Activated CD8-positive, alpha-beta T cell treated with anti-CD3 and anti-CD28 coated beads, Interleukin-2, amount 10 ng/mL, durations not matched to agents 7 days and 5 days (primary cell): ENCODE measurements at regions of chr15 and their contacts with region 1.

Region 1: GRCh38 chr15:90362936-90363212 is 10.8 kb downstream of the ZNF774 start:
- DNase-seq: no peak
- ATAC-seq: no peak
- H3K4me3 Mint-ChIP-seq: no peak overlapping the region
- H3K27ac Mint-ChIP-seq: no peak overlapping the region
- H3K4me1 Mint-ChIP-seq: peaks cover 42% of the 10 kb centered on the region
- H3K27me3 Mint-ChIP-seq: no peaks in the 10 kb centered on the region

Region 2: GRCh38 chr15:90382305-90382704 is 19.4 kb after region 1 on chr15:
- CTCF ChIA-PET with region 1: interaction called, 39 read pairs
- POLR2A ChIA-PET with region 1: interaction called, 15 read pairs
- DNase-seq: no peak
- ATAC-seq: no peak
- H3K4me3 Mint-ChIP-seq: no peak overlapping the region
- H3K27ac Mint-ChIP-seq: peak overlapping the region; percentile 1
- H3K4me1 Mint-ChIP-seq: peaks cover 38% of the 10 kb centered on the region
- H3K27me3 Mint-ChIP-seq: no peaks in the 10 kb centered on the region

Region 3: DNA sequence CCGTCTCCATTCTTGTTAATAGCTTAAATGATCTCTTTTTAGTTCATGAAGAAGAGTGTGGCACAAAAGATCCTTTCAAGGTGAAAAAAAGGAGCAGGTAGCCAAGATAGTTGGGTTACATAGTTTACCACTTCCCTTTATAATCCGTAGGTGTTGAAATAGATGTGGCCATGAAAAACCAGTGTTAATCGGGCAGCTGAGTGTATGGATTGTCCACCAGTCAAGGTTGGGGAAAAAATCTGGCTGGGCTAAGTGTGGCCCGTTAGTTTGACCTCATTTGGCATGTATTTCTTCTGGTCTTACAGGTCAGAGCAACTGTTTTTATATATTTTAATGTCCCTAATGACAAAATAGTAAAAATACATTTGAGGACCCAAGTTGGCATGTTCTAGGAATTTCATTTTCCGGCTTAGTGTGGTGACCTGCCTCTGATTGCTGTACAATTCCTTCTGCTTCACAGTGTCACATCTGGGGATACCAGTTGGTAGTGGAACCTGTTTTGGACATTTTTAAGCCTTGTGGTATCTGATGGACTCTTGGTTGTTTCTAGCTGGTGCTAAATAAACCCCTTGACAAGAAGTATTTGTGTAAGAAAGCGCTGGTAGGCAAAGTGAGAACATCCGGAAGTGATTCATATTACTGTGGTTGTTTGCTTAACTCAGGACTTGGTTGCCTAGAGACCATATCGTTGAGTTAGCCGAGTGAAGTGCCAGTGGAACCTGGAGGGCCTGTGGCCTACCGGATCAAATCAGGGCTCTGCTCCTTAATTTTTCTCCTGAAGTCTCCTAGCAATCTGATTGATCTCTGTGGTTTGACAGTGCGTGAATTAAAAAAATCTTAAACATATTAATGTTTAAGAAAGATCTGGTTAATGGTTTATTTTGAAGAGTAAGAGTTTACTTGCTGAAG is 37.8 kb after region 1 on chr15:
- CTCF ChIA-PET with region 1: interaction called, 36 read pairs
- POLR2A ChIA-PET with region 1: interaction called, 4 read pairs
- DNase-seq: peak; percentile 84
- ATAC-seq: peak; percentile 96
- H3K4me3 Mint-ChIP-seq: peak overlapping the region; percentile 68
- H3K27ac Mint-ChIP-seq: peak overlapping the region; percentile 93
- H3K4me1 Mint-ChIP-seq: peaks cover 60% of the 10 kb centered on the region
- H3K27me3 Mint-ChIP-seq: no peaks in the 10 kb centered on the region

Region 4: GRCh38 chr15:90436952-90437351 is 74.1 kb after region 1 on chr15:
- CTCF ChIA-PET with region 1: interaction called, 11 read pairs
- POLR2A ChIA-PET with region 1: no interaction called
- DNase-seq: no peak
- ATAC-seq: peak; percentile 30
- H3K4me3 Mint-ChIP-seq: no peak overlapping the region
- H3K27ac Mint-ChIP-seq: no peak overlapping the region
- H3K4me1 Mint-ChIP-seq: peaks cover 13% of the 10 kb centered on the region
- H3K27me3 Mint-ChIP-seq: no peaks in the 10 kb centered on the region

Region 5: DNA sequence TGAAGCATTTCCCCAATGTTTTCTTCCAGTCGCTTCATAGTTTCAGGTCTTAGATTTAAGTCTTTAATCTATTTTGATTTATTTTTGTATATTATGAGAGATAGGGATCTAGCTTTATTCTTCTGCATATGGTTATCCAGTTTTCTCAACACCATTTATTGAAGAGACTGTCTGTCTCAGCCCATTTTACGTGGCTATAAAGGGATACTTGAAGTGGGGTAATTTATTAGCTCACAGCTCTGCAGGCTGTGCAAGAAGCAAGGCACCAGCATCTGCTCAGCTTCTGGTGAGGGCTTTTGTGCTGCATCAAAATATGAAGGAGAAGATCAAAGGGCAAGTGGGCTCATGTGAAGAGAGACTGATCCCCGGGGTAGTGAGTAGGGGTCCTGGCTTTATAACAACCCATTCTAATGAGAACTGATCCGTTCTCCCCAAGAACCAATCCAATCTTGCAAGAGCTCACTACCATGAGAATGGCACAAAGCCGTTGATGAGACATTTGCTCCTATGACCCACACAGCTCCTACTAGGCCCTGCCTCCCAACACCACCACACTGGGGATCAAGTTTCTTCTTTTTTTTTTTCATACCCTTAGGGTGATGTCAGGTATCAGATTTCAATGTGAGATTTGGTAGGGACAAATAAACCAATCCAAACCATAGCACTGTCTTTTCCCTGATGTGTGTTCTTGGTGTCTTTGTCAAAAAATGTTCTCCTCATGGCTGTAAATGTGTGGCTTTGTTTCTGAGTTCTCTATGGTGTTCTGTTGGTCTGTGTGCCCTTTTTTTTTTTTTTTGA is 88.4 kb after region 1 on chr15:
- CTCF ChIA-PET with region 1: interaction called, 27 read pairs
- POLR2A ChIA-PET with region 1: no interaction called
- DNase-seq: no peak
- ATAC-seq: no peak
- H3K4me3 Mint-ChIP-seq: no peak overlapping the region
- H3K27ac Mint-ChIP-seq: no peak overlapping the region
- H3K4me1 Mint-ChIP-seq: peaks cover 11% of the 10 kb centered on the region
- H3K27me3 Mint-ChIP-seq: no peaks in the 10 kb centered on the region

Region 6: DNA sequence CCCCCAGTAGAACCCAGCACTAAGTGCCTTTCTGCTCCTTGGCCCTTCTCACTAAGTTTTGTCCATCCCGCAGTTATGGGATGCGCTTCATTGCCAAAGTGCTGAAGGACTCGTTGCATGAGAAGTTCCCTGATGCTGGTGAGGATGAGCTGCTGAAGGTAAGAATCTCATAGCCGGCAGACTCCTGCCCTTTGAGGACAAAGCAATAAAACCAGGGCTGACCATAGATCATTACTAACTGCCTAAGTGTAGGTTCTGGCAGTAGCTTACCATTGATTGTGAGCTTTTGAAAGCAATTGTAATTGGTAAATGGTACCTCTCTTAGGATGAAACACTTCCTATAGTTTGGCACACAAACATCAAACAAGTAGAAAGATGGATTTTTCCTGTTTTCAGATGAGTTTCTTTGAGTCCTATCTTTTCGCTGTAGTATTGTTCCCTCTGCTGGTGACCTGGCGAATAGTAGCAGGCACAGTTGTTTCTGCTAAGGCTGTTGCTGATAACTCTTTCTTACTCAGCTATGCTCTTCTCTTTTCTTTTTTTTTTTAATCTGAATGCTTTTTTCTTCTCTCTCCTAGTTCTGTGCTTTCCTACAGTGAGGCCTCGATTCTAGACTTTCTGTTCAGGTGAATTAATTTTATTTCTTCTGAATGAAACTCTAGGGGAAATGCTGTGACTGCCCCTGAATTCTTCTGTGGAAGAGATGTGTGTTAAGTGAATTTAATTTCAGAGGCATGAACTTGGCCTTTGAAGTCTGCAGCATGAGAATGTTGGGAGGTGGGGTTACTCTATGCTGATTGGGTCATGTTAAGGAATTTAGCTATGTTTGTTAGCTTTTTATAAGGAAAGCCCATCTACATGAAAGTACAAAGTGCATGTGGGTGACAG is 119.5 kb after region 1 on chr15:
- CTCF ChIA-PET with region 1: interaction called, 80 read pairs
- POLR2A ChIA-PET with region 1: no interaction called
- DNase-seq: peak; percentile 59
- ATAC-seq: no peak
- H3K4me3 Mint-ChIP-seq: no peak overlapping the region
- H3K27ac Mint-ChIP-seq: peak overlapping the region; percentile 22
- H3K4me1 Mint-ChIP-seq: peaks cover 38% of the 10 kb centered on the region
- H3K27me3 Mint-ChIP-seq: no peaks in the 10 kb centered on the region